Sigmoid colon (tissue), 7 donors: ENCODE measurements at regions of chr2 and their contacts with region 1.

Region 1: DNA sequence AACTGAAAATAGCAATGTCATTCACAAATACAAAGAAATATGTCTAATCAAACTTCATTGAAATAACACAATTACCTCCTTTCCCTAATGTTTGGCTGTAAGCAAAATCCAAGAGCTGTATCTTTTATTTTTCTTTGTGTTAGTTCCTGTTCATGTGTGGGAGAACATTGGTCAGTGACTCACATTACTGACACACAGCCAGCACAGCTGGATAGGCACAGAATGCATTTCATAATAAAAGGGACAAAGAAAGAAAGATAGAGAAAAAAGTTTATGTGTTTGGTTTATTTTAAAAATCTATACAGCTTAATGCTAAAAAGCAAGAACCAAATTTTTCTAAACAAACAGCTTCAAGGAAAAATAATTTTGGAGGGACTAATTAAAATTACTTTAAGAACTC is 185.6 kb upstream of the COL3A1 start:
- DNase-seq: peak; percentile 91
- H3K4me3 ChIP-seq: peak overlapping the region in 1 of 4 donors; percentile 18
- H3K27ac ChIP-seq: peak overlapping the region; percentile 76 to 87 (median 84)
- H3K4me1 ChIP-seq: peaks cover 0 to 50% (median 33%) of the 10 kb centered on the region in 4 donors
- H3K27me3 ChIP-seq: no peaks in the 10 kb centered on the region
- CTCF ChIP-seq: no peak
- EP300 ChIP-seq: no peak
- POLR2A ChIP-seq: no peak

Region 2: DNA sequence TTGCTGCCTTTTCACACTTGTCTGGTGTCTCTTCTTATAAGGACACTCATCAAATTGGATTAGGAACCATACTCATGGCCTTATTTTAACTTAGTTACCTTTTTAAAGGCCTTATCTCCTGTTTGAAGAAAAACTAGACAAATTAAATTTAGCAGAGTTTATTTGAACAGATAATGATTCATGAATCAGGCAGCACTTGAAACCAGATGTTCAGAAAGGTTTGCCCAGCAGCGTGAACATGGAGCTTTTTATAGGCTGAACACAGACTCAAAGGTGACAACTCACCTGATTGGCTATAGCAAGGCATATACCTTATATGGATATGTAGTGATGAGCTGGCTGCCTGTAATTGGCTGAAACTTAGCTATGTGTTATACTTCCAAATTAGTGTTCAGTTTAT is 258.9 kb before region 1 on chr2:
- intact Hi-C with region 1: loop called (anchors 5 kb)
- DNase-seq: no peak
- H3K4me3 ChIP-seq: no peak overlapping the region
- H3K27ac ChIP-seq: no peak overlapping the region
- H3K4me1 ChIP-seq: peaks cover 0 to 39% (median 23%) of the 10 kb centered on the region in 4 donors
- H3K27me3 ChIP-seq: no peaks in the 10 kb centered on the region
- CTCF ChIP-seq: no peak
- EP300 ChIP-seq: no peak
- POLR2A ChIP-seq: no peak

Region 3: DNA sequence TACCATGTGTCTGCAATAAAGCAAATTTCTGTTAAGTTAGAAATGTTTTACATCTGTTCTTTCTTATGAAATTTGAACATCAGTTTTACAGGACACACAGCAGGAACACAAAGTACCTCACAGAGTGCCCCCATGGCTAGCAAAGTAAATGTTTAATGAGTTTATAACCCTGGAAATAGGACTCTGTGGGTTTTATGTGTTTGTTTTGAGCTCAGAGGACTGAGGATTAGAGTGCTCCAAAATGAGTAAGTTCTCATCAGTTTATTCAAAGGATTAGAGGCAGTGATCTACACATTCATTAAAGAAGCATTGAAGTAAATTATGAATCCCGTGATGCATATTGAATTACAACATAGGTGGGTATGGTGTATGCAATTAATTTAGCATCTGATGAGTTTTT is 215.2 kb before region 1 on chr2:
- intact Hi-C with region 1: loop called (anchors 10 kb)
- DNase-seq: no peak
- H3K4me3 ChIP-seq: no peak overlapping the region
- H3K27ac ChIP-seq: peak overlapping the region in 1 of 4 donors; percentile 25
- H3K4me1 ChIP-seq: peaks cover 0 to 30% (median 22%) of the 10 kb centered on the region in 4 donors
- H3K27me3 ChIP-seq: no peaks in the 10 kb centered on the region
- CTCF ChIP-seq: no peak
- EP300 ChIP-seq: no peak
- POLR2A ChIP-seq: no peak

Region 4: DNA sequence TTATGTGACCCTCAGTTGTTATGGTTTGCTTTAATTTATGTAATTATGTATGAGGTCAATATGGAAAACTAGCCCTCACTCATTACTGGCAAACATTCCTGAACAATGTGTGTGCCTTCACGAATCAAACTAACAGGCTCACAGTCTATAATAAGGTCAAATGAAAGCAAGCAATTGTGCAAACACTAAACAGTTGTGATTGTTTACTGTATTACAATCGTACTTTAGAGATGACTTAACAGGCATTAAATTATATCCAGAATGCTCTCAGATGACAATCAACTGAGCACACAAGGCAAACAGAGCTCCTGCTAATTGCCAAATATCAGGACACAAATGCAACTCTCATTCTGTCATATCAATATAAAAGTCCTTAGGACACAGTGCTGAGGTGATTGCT is 361.4 kb after region 1 on chr2:
- intact Hi-C with region 1: no loop called
- DNase-seq: no peak
- H3K4me3 ChIP-seq: no peak overlapping the region
- H3K27ac ChIP-seq: peak overlapping the region in 3 of 4 donors; percentile 10 to 39 (median 29)
- H3K4me1 ChIP-seq: peaks cover 0 to 63% (median 45%) of the 10 kb centered on the region in 4 donors
- H3K27me3 ChIP-seq: no peaks in the 10 kb centered on the region
- CTCF ChIP-seq: no peak
- EP300 ChIP-seq: no peak
- POLR2A ChIP-seq: no peak